ENCODE measurements at regions of chr7 and their contacts with region 1.

Region 1: GRCh38 chr7:85023045-85023712 is 163.7 kb downstream of the SEMA3D start:
- DNase-seq: no peak
- H3K4me3 ChIP-seq: no peak overlapping the region
- H3K27ac ChIP-seq: no peak overlapping the region
- H3K4me1 ChIP-seq: peaks cover 0 to 4% (median 0%) of the 10 kb centered on the region in 4 donors
- H3K27me3 ChIP-seq: no peaks in the 10 kb centered on the region
- CTCF ChIP-seq: peak; percentile 64 to 82

Region 2: GRCh38 chr7:83976295-83976694 is 1046.9 kb before region 1 on chr7:
- intact Hi-C with region 1: loop called (anchors 10 kb)
- DNase-seq: no peak
- H3K4me3 ChIP-seq: no peak overlapping the region
- H3K27ac ChIP-seq: no peak overlapping the region
- H3K4me1 ChIP-seq: no peaks in the 10 kb centered on the region
- H3K27me3 ChIP-seq: no peaks in the 10 kb centered on the region
- CTCF ChIP-seq: peak; percentile 37 to 46

Region 3: DNA sequence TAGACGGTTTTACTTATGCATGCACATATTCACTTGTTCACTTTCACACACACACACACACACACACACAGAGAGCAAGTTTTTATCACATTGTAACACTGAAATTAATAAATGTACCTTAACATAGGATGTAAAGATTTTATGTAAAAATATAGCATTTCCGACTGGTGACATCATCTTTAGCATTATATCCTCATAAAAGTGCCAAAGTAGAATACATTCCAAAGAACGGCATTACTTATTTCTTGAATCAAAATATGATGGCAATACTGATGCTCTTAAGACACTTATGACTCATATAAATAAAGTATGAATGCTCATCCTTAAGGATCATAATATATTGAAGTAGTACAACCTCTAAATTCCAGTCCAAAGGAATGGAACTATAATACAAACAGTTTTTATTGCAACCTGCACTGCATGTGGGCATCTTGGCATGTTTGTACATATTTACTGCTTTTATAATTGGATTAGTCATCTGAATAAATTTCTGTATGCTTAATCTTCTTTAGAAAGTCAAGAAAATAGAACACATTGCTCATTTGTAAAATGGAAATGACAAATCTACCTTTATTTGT is 538.6 kb before region 1 on chr7:
- intact Hi-C with region 1: loop called (anchors 5 kb)
- DNase-seq: no peak
- H3K4me3 ChIP-seq: no peak overlapping the region
- H3K27ac ChIP-seq: no peak overlapping the region
- H3K4me1 ChIP-seq: no peaks in the 10 kb centered on the region
- H3K27me3 ChIP-seq: no peaks in the 10 kb centered on the region
- CTCF ChIP-seq: no peak

Region 4: GRCh38 chr7:84879570-84880325 is 143.4 kb before region 1 on chr7:
- intact Hi-C with region 1: no loop called
- DNase-seq: no peak
- H3K4me3 ChIP-seq: no peak overlapping the region
- H3K27ac ChIP-seq: no peak overlapping the region
- H3K4me1 ChIP-seq: no peaks in the 10 kb centered on the region
- H3K27me3 ChIP-seq: no peaks in the 10 kb centered on the region
- CTCF ChIP-seq: no peak